Activated naive CD4-positive, alpha-beta T cell treated with anti-CD3 and anti-CD28 coated beads, Interleukin-2, amount 10 ng/mL, durations not matched to agents 7 days and 5 days (primary cell): ENCODE measurements at regions of chr11 and their contacts with region 1.

Region 1: GRCh38 chr11:33808228-33808828 is 34.0 kb upstream of the FBXO3 start:
- DNase-seq: peak; percentile 89
- H3K4me3 Mint-ChIP-seq: no peak overlapping the region
- H3K27ac Mint-ChIP-seq: no peak overlapping the region
- H3K4me1 Mint-ChIP-seq: no peaks in the 10 kb centered on the region
- H3K27me3 Mint-ChIP-seq: peaks cover 47% of the 10 kb centered on the region

Region 2: GRCh38 chr11:33819278-33819677 is 10.9 kb after region 1 on chr11:
- CTCF ChIA-PET with region 1: interaction called, 11 read pairs
- DNase-seq: no peak
- H3K4me3 Mint-ChIP-seq: no peak overlapping the region
- H3K27ac Mint-ChIP-seq: no peak overlapping the region
- H3K4me1 Mint-ChIP-seq: no peaks in the 10 kb centered on the region
- H3K27me3 Mint-ChIP-seq: peaks cover 28% of the 10 kb centered on the region

Region 3: DNA sequence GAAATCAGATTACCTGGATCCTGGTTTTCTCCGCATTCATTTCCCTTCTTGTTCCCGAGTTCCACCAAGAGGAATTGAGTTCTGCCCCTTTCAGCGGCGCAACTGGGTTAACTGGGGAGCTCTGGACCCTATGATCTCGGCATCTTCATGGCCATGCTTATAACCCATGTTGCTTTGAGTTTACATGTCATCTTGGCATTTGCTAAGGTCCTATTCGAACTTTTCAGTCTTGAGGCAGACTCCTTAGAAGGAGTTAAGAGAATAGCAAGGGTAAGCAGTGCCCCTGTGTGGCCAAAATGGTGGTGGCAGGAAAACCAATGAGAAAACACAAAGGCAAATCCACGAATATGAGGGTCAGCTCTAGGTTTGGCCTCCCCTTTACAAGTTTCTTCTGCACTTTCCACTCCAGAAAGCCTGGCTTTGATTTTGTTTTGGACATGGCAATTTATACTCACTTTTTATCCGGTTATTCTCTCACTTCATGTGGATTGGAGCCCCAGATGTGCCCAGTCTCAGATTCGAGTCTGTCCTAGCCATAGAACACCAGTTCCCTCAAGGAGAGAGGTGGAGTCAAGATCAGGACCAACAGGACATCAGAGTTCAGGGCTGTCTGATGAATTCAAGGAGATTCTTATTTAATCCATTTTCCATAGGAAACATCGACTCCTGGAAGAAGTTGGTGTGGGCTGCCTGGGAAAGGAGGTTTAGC is 21.3 kb after region 1 on chr11:
- CTCF ChIA-PET with region 1: interaction called, 57 read pairs
- DNase-seq: peak; percentile 71
- H3K4me3 Mint-ChIP-seq: peak overlapping the region; percentile 52
- H3K27ac Mint-ChIP-seq: no peak overlapping the region
- H3K4me1 Mint-ChIP-seq: peaks cover 3% of the 10 kb centered on the region
- H3K27me3 Mint-ChIP-seq: peaks cover 69% of the 10 kb centered on the region

Region 4: GRCh38 chr11:34091825-34092224 is 283.5 kb after region 1 on chr11:
- CTCF ChIA-PET with region 1: no interaction called
- DNase-seq: no peak
- H3K4me3 Mint-ChIP-seq: no peak overlapping the region
- H3K27ac Mint-ChIP-seq: no peak overlapping the region
- H3K4me1 Mint-ChIP-seq: peaks cover 6% of the 10 kb centered on the region
- H3K27me3 Mint-ChIP-seq: no peaks in the 10 kb centered on the region